Mammary epithelial cell (primary cell): ENCODE measurements at regions of chr10 and their contacts with region 1.

Region 1: GRCh38 chr10:119742947-119743648 is 17.2 kb downstream of the INPP5F start:
- DNase-seq: no peak
- H3K4me3 ChIP-seq: no peak overlapping the region
- H3K27ac ChIP-seq: no peak overlapping the region
- H3K4me1 ChIP-seq: peaks cover 12% of the 10 kb centered on the region
- H3K27me3 ChIP-seq: no peaks in the 10 kb centered on the region
- CTCF ChIP-seq: no peak

Region 2: GRCh38 chr10:119859420-119860258 is 116.5 kb after region 1 on chr10:
- CTCF ChIA-PET with region 1: no interaction called
- dilution Hi-C with region 1: no loop called
- in situ Hi-C with region 1: loop called in 1 of 2 experiments (anchors 10 kb)
- intact Hi-C with region 1: no loop called
- DNase-seq: peak; percentile 27
- H3K4me3 ChIP-seq: no peak overlapping the region
- H3K27ac ChIP-seq: no peak overlapping the region
- H3K4me1 ChIP-seq: no peaks in the 10 kb centered on the region
- H3K27me3 ChIP-seq: no peaks in the 10 kb centered on the region
- CTCF ChIP-seq: peak; percentile 47 to 60